ENCODE measurements at regions of chr3 and their contacts with region 1.

Region 1: DNA sequence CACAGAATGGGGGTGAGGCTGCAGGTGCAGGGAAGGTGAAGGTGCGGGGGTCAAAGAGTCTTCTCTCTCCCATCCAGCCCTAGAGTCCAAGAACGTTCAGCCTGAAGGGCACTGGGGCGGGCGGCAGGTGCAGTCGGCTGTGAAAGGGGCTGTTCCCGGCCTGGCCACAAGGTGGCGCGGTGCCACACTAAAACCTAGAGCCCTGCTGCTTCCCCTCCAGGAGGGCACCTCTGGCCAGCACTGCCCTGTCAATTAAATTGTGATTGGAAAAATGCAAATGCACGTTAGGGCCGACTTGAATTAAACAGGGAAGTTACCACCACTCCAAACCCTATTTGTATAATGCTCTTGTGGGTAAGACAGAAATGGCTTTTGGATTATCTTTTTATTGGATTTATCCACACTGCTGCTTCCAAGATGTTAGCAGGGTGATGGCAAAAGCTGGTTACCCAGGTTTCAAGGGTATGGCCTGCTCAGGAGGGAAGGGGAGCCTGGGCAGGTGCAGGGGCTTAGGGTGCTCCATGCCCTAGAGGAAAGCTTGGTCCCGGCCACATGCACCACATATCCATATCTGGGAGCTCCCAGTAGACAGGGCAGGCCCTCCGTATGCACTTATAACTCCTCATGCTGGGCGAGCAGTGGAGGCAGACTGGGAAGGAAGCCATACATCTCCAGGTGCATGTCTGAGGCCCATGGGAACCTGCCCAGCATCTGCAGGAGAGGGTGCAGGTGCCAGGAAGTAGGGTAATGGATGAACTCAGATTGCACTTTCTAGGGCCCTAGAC is 119.8 kb downstream of the ADCY5 start:
- DNase-seq: no peak
- H3K4me3 ChIP-seq: no peak overlapping the region
- H3K27ac ChIP-seq: no peak overlapping the region
- H3K4me1 ChIP-seq: no peaks in the 10 kb centered on the region
- H3K27me3 ChIP-seq: no peaks in the 10 kb centered on the region
- CTCF ChIP-seq: peak; percentile 89 to 93 (median 92)
- POLR2A ChIP-seq: no peak

Region 2: GRCh38 chr3:123282461-123282860 is 46.6 kb before region 1 on chr3:
- intact Hi-C with region 1: no loop called
- DNase-seq: no peak
- H3K4me3 ChIP-seq: no peak overlapping the region
- H3K27ac ChIP-seq: no peak overlapping the region
- H3K4me1 ChIP-seq: no peaks in the 10 kb centered on the region
- H3K27me3 ChIP-seq: no peaks in the 10 kb centered on the region
- CTCF ChIP-seq: no peak
- POLR2A ChIP-seq: no peak

Region 3: GRCh38 chr3:123361071-123361470 is 32.0 kb after region 1 on chr3:
- intact Hi-C with region 1: loop called (anchors 1 kb)
- DNase-seq: no peak
- H3K4me3 ChIP-seq: no peak overlapping the region
- H3K27ac ChIP-seq: no peak overlapping the region
- H3K4me1 ChIP-seq: no peaks in the 10 kb centered on the region
- H3K27me3 ChIP-seq: no peaks in the 10 kb centered on the region
- CTCF ChIP-seq: no peak
- POLR2A ChIP-seq: no peak

Region 4: GRCh38 chr3:123449102-123449996 is 120.3 kb after region 1 on chr3:
- intact Hi-C with region 1: loop called (anchors 2 kb)
- DNase-seq: no peak
- H3K4me3 ChIP-seq: peak overlapping the region; percentile 58 to 77
- H3K27ac ChIP-seq: peak overlapping the region; percentile 82
- H3K4me1 ChIP-seq: peaks cover 23% of the 10 kb centered on the region
- H3K27me3 ChIP-seq: no peaks in the 10 kb centered on the region
- CTCF ChIP-seq: no peak
- POLR2A ChIP-seq: no peak

Region 5: DNA sequence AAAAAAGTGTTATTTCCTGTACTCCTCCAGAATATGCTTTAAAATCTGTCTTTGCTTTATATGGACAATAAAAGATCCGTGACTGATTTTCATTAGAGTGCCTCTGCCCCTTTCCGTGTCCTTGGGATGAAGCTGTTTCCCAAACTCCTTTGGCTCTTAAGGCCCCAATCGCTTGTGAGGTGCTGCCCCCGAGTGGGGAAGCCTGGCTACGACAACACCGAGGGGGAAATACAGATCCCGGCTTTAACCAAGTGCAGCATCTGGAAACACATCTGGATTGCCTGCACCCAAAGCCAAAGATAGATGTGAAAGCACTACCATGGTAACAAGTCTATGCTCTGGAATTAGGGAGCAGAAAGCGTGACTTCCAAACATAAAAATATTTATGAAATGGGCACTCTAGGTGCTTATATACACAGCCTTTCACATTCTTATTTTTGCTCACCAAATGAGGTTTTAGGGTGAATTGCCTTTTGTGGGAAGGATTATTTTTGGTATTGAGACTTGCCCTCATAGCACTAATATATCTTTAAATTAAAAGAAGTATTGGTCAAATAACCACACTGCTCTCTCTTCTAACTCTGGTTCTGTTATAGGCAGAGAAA is 160.5 kb after region 1 on chr3:
- intact Hi-C with region 1: loop called (anchors 5 kb)
- DNase-seq: no peak
- H3K4me3 ChIP-seq: no peak overlapping the region
- H3K27ac ChIP-seq: no peak overlapping the region
- H3K4me1 ChIP-seq: no peaks in the 10 kb centered on the region
- H3K27me3 ChIP-seq: no peaks in the 10 kb centered on the region
- CTCF ChIP-seq: peak; percentile 47 to 85 (median 78)
- POLR2A ChIP-seq: no peak

Region 6: DNA sequence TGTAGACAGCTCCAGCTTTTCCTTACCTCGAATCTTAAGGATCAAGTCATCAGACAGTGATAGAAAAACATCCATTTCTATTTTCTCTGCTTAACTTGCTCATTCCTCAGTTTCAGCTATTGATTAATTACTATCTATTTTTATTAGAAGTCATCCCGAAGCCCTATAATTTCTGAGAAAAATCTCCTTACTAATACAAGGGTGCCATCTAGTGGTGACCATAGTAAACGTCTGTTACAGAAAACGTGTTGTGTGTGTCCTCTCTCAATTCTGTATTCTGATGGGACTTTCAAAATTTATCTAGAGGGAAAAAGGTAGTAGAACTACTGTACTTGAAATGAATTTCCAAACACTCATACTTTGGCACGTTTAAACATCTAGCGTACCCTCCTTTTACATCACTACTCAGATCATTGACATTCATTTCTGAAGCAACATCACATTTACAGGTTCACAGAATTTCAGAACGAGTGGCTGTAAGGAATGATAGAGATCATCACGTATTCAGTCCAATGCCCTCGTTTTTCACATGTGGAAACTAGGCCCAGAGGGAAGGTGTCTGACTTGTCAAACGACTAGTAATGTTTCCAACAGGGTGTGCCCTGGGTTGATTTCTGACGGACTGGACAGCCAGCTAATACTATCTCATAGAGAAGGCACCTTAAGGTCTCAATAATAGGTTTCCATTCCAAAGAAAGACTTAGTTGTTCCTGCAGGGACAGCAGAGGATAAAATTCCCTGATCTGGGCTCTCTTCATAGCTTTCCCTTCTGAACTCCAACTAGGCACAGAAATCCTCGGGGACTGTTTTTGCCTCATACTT is 230.2 kb after region 1 on chr3:
- intact Hi-C with region 1: loop called (anchors 10 kb)
- DNase-seq: no peak
- H3K4me3 ChIP-seq: no peak overlapping the region
- H3K27ac ChIP-seq: no peak overlapping the region
- H3K4me1 ChIP-seq: no peaks in the 10 kb centered on the region
- H3K27me3 ChIP-seq: no peaks in the 10 kb centered on the region
- CTCF ChIP-seq: peak; percentile 32 to 57 (median 47)
- POLR2A ChIP-seq: no peak

Measured in vagina (tissue), 2 donors.